IMR-90 (cell line): ENCODE measurements at regions of chrX and their contacts with region 1.

Region 1: GRCh38 chrX:72714476-72714916 is 390 bp upstream of the PHKA1 start:
- DNase-seq: peak; percentile 62
- ATAC-seq: peak; percentile 86
- H3K4me3 ChIP-seq: peak overlapping the region; percentile 76
- H3K27ac ChIP-seq: peak overlapping the region; percentile 48
- H3K4me1 ChIP-seq: no peaks in the 10 kb centered on the region
- H3K27me3 ChIP-seq: peaks cover 2% of the 10 kb centered on the region; the same call in 1 of the 2 replicates
- CTCF ChIP-seq: 0 out of 2 replicates have a peak, but pooled peaks have one; percentile 9
- POLR2A ChIP-seq: no peak
- RAD21 ChIP-seq: no peak

Region 2: GRCh38 chrX:72169008-72169728 is 545.3 kb before region 1 on chrX:
- CTCF ChIA-PET with region 1: no interaction called
- POLR2A ChIA-PET with region 1: no interaction called
- dilution Hi-C with region 1: no loop called
- in situ Hi-C with region 1: no loop called
- intact Hi-C with region 1: no loop called
- DNase-seq: no peak
- ATAC-seq: no peak
- H3K4me3 ChIP-seq: no peak overlapping the region; the same call in 1 of the 2 replicates
- H3K27ac ChIP-seq: no peak overlapping the region
- H3K4me1 ChIP-seq: no peaks in the 10 kb centered on the region
- H3K27me3 ChIP-seq: peaks cover 20% of the 10 kb centered on the region
- CTCF ChIP-seq: no peak
- POLR2A ChIP-seq: no peak
- RAD21 ChIP-seq: no peak

Region 3: GRCh38 chrX:72572248-72573157 is 142.0 kb before region 1 on chrX and contains the start of gene HDAC8:
- CTCF ChIA-PET with region 1: no interaction called
- POLR2A ChIA-PET with region 1: no interaction called
- dilution Hi-C with region 1: no loop called
- in situ Hi-C with region 1: loop called (anchors 10 kb)
- intact Hi-C with region 1: loop called (anchors 5 kb)
- DNase-seq: peak; percentile 86
- ATAC-seq: peak; percentile 89
- H3K4me3 ChIP-seq: peak within 1 kb of the TSS; percentile 90
- H3K27ac ChIP-seq: peak within 1 kb of the TSS; percentile 83
- H3K4me1 ChIP-seq: no peaks in the 10 kb centered on the region
- H3K27me3 ChIP-seq: peaks cover 5% of the 10 kb centered on the region
- CTCF ChIP-seq: no peak
- POLR2A ChIP-seq: no peak
- RAD21 ChIP-seq: no peak
- total RNA-seq, gene HDAC8: 28.5 and 30.8 TPM in 2 replicates

Region 4: GRCh38 chrX:72609313-72609712 is 105.2 kb before region 1 on chrX:
- CTCF ChIA-PET with region 1: no interaction called
- POLR2A ChIA-PET with region 1: no interaction called
- dilution Hi-C with region 1: no loop called
- in situ Hi-C with region 1: loop called (anchors 10 kb)
- intact Hi-C with region 1: no loop called
- DNase-seq: peak; percentile 6
- ATAC-seq: 0 out of 2 replicates have a peak, but pooled peaks have one; percentile 42
- H3K4me3 ChIP-seq: no peak overlapping the region
- H3K27ac ChIP-seq: no peak overlapping the region
- H3K4me1 ChIP-seq: no peaks in the 10 kb centered on the region
- H3K27me3 ChIP-seq: peaks cover 6% of the 10 kb centered on the region
- CTCF ChIP-seq: no peak
- POLR2A ChIP-seq: no peak
- RAD21 ChIP-seq: no peak

Region 5: DNA sequence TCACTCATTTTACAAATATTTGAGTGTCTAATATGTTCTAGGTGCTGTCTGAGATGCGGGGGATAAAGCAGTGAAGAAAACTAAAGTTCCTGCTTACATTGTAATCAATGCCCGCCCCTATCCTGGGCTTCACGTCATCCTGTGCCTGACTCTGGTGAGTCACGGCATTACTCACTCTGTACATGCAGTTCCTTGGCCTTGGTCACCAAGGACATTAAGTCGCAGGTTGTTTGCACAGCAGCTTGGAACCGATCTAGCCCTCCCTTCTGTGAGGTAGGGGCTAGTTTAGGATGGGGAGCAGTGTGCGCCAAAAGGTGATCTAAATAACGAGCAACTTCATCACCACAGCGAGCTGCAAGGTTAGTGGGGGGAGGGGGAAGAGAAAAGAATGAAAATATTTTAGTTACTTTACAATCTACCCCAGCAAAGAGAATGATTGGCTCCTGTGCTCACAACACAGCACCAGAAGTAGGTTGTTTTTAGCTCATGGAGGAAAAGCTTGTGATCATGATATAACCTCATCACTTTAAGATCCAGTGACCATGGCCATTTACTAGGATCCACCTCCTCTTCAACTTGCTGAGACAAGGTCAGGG is 93.8 kb before region 1 on chrX:
- CTCF ChIA-PET with region 1: no interaction called
- POLR2A ChIA-PET with region 1: no interaction called
- dilution Hi-C with region 1: no loop called
- in situ Hi-C with region 1: no loop called
- intact Hi-C with region 1: loop called (anchors 1 kb)
- DNase-seq: peak; percentile 89
- ATAC-seq: peak; percentile 91
- H3K4me3 ChIP-seq: peak overlapping the region; percentile 29; the same call in 1 of the 2 replicates
- H3K27ac ChIP-seq: peak overlapping the region; percentile 63
- H3K4me1 ChIP-seq: peaks cover 4% of the 10 kb centered on the region
- H3K27me3 ChIP-seq: no peaks in the 10 kb centered on the region; the same call in none of the 2 replicates
- CTCF ChIP-seq: no peak
- POLR2A ChIP-seq: no peak
- RAD21 ChIP-seq: no peak